ENCODE measurements at regions of chr9 and their contacts with region 1.

Region 1: GRCh38 chr9:5586391-5586802 is 42.5 kb upstream of the RIC1 start:
- DNase-seq: no peak
- ATAC-seq: no peak
- H3K4me3 ChIP-seq: no peak overlapping the region
- H3K27ac ChIP-seq: no peak overlapping the region
- H3K4me1 ChIP-seq: no peaks in the 10 kb centered on the region
- H3K27me3 ChIP-seq: no peaks in the 10 kb centered on the region

Region 2: DNA sequence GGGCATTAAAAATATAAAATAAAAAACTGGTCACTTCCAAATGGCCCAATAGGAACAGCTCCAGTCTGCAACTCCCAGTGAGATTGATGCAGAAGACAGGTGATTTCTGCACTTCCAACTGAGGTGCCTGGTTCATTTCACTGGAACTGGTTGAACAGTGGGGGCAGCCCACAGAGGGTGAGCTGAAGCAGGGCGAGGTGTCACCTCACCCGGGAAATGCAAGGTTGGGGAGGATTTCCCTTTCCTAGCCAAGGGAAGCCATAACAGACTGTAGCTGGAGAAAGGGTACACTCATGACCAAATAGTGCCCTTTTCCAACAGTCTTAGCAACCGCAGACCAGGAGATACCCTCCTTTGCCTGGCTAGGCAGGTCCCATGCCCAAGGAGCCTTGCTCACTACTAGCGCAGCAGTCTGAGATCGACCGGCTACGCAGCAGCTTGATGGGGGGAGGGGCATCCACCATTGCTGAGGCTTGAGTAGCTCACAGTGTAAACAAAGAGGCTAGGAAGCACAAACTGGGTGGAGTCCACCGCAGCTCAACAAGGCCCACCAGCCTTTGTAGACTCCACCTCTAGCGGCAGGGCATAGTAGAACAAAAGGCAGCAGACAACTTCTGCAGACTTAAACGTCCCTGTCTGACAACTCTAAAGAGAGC is 259.4 kb before region 1 on chr9:
- intact Hi-C with region 1: no loop called
- DNase-seq: no peak
- ATAC-seq: no peak
- H3K4me3 ChIP-seq: no peak overlapping the region
- H3K27ac ChIP-seq: no peak overlapping the region
- H3K4me1 ChIP-seq: no peaks in the 10 kb centered on the region
- H3K27me3 ChIP-seq: no peaks in the 10 kb centered on the region

Region 3: DNA sequence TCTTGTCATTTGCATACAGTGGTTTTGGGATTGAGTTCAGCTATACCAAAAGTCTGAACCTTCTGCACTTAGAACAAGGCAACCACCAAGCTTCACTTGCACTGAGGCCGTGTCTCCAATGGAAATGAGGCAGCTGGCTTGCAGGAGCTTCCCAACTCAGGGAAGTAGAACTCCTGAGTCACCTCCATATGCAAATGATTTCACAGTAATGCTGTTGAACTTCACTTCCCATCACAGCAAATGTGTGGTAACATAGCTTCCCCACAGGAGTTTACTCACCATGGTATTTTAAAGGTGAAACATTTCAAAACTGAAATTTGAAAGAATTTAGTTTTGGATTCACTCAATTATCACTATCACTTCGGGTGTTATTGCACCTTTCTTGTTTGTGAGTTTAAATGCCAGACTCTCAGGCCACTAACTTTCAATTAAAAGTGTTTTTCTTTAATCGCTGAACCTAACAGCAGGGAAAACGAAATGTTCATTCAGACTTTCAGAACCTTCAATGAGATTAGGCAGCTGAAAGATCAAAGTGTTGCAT is 127.0 kb before region 1 on chr9:
- intact Hi-C with region 1: loop called (anchors 5 kb)
- DNase-seq: no peak
- ATAC-seq: no peak
- H3K4me3 ChIP-seq: no peak overlapping the region
- H3K27ac ChIP-seq: no peak overlapping the region
- H3K4me1 ChIP-seq: no peaks in the 10 kb centered on the region
- H3K27me3 ChIP-seq: no peaks in the 10 kb centered on the region

Measured in aorta (tissue), 5 donors.